ENCODE measurements at regions of chr1 and their contacts with region 1.

Region 1: GRCh38 chr1:27992276-27992675 is 32.5 kb downstream of the XKR8 start:
- DNase-seq: no peak
- H3K4me3 ChIP-seq: no peak overlapping the region
- CTCF ChIP-seq: no peak

Region 2: GRCh38 chr1:27858072-27858958 is 134.0 kb before region 1 on chr1:
- in situ Hi-C with region 1: loop called (anchors 5 kb)
- DNase-seq: peak; percentile 64
- H3K4me3 ChIP-seq: no peak overlapping the region
- CTCF ChIP-seq: peak; percentile 98

Measured in astrocyte of the cerebellum (primary cell).